B cell (primary cell): ENCODE measurements at regions of chr12 and their contacts with region 1.

Region 1: GRCh38 chr12:1605129-1606020 is 11.0 kb upstream of the FBXL14 start:
- DNase-seq: peak; percentile 83
- ATAC-seq: peak; percentile 61
- H3K4me3 ChIP-seq: peak overlapping the region; percentile 37 to 63 (median 44)
- H3K4me3 Mint-ChIP-seq: peak overlapping the region; percentile 97
- H3K27ac ChIP-seq: no peak overlapping the region
- H3K27ac Mint-ChIP-seq: peak overlapping the region; percentile 66
- H3K4me1 ChIP-seq: peaks cover 11 to 27% of the 10 kb centered on the region in 2 donors
- H3K4me1 Mint-ChIP-seq: peaks cover 29% of the 10 kb centered on the region
- H3K27me3 ChIP-seq: no peaks in the 10 kb centered on the region
- H3K27me3 Mint-ChIP-seq: peaks cover 3% of the 10 kb centered on the region
- CTCF ChIP-seq: peak; percentile 72

Region 2: DNA sequence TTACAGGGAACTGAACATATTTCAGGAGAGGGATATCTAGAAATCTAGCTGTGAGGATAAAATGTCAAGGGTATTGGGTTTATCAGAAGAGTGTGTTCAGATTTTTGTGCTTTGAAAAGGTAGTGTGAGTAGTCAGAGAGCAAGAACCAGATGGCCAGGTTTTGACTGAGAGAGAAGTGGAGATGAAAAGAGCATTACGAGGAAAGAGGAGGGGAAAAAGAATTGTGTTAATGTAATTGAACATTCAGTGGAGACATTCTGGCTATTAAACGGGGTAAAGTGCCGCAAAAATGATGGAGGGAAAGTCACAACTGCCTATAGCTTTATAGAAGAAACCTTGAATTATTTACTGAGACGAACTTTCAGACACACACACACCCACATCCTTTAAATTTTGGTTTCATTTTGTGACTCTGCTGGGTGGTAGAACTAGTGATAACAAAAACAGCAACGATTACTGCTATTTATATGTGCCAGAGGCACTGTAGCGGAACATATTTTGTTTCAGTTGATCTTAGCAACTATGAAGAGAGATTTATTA is 400.7 kb before region 1 on chr12:
- CTCF ChIA-PET with region 1: interaction called, 6 read pairs
- POLR2A ChIA-PET with region 1: no interaction called
- intact Hi-C with region 1: loop called (anchors 5 kb)
- DNase-seq: peak; percentile 74
- ATAC-seq: peak; percentile 87
- H3K4me3 ChIP-seq: peak overlapping the region; percentile 42 to 85 (median 63)
- H3K4me3 Mint-ChIP-seq: no peak overlapping the region
- H3K27ac ChIP-seq: peak overlapping the region; percentile 86 to 94
- H3K27ac Mint-ChIP-seq: no peak overlapping the region
- H3K4me1 ChIP-seq: peaks cover 23 to 48% of the 10 kb centered on the region in 2 donors
- H3K4me1 Mint-ChIP-seq: peaks cover 28% of the 10 kb centered on the region
- H3K27me3 ChIP-seq: no peaks in the 10 kb centered on the region
- H3K27me3 Mint-ChIP-seq: no peaks in the 10 kb centered on the region
- CTCF ChIP-seq: no peak

Region 3: DNA sequence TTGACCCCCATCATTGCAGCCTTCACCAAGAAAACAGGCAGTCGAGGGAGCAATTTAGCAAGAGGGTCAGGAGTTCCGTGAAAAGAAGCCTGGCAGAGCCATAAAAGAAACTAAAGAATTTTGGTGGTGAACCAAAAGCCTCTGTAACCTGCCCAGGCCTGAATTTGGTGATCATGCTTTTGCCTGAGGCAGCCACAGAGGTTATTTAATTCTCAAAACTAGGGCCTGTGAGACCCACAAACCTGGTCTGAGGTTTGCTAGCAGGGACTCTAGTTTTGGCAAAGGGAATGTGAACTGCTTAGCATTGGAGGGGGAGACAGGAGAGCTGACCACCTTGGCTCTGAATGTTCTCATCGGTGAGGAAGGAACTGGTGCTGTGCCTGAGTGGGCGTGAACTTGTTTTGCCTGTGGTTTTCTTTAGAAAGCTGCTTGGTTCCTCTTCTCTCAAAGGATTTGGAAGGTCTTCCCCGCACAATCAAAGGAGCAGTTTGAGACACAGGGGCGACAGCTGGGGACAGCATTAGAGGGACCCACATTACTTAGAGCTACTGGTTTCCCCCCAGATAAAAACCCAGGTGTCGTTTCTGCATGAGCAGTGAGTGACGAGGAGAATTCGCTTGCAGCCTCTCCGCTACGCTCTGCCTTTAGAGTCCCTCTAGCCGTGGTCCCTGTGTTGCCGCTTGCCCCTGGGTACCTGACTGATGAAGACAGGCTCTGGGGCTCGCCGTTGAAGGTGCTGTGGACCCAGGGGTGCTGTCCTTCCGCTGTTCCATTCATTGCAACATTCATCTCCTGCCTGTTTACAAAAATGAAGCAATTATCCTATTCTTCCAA is 11.1 kb after region 1 on chr12:
- CTCF ChIA-PET with region 1: interaction called, 12 read pairs
- POLR2A ChIA-PET with region 1: interaction called, 5 read pairs
- intact Hi-C with region 1: no loop called
- DNase-seq: peak; percentile 35
- ATAC-seq: peak; percentile 41
- H3K4me3 ChIP-seq: peak overlapping the region in 1 of 5 experiments; percentile 9
- H3K4me3 Mint-ChIP-seq: peak overlapping the region; percentile 42
- H3K27ac ChIP-seq: no peak overlapping the region
- H3K27ac Mint-ChIP-seq: no peak overlapping the region
- H3K4me1 ChIP-seq: peaks cover 17 to 25% of the 10 kb centered on the region in 2 donors
- H3K4me1 Mint-ChIP-seq: peaks cover 33% of the 10 kb centered on the region
- H3K27me3 ChIP-seq: peaks cover 0 to 2% (median 0%) of the 10 kb centered on the region in 4 experiments
- H3K27me3 Mint-ChIP-seq: no peaks in the 10 kb centered on the region
- CTCF ChIP-seq: no peak

Region 4: GRCh38 chr12:1634590-1635191 is 29.3 kb after region 1 on chr12:
- CTCF ChIA-PET with region 1: interaction called, 12 read pairs
- POLR2A ChIA-PET with region 1: no interaction called
- intact Hi-C with region 1: no loop called
- DNase-seq: peak; percentile 69
- ATAC-seq: peak; percentile 50
- H3K4me3 ChIP-seq: no peak overlapping the region
- H3K4me3 Mint-ChIP-seq: no peak overlapping the region
- H3K27ac ChIP-seq: no peak overlapping the region
- H3K27ac Mint-ChIP-seq: no peak overlapping the region
- H3K4me1 ChIP-seq: peaks cover 19 to 20% of the 10 kb centered on the region in 2 donors
- H3K4me1 Mint-ChIP-seq: peaks cover 19% of the 10 kb centered on the region
- H3K27me3 ChIP-seq: peaks cover 0 to 52% (median 31%) of the 10 kb centered on the region in 4 experiments
- H3K27me3 Mint-ChIP-seq: peaks cover 30% of the 10 kb centered on the region
- CTCF ChIP-seq: peak; percentile 91

Region 5: DNA sequence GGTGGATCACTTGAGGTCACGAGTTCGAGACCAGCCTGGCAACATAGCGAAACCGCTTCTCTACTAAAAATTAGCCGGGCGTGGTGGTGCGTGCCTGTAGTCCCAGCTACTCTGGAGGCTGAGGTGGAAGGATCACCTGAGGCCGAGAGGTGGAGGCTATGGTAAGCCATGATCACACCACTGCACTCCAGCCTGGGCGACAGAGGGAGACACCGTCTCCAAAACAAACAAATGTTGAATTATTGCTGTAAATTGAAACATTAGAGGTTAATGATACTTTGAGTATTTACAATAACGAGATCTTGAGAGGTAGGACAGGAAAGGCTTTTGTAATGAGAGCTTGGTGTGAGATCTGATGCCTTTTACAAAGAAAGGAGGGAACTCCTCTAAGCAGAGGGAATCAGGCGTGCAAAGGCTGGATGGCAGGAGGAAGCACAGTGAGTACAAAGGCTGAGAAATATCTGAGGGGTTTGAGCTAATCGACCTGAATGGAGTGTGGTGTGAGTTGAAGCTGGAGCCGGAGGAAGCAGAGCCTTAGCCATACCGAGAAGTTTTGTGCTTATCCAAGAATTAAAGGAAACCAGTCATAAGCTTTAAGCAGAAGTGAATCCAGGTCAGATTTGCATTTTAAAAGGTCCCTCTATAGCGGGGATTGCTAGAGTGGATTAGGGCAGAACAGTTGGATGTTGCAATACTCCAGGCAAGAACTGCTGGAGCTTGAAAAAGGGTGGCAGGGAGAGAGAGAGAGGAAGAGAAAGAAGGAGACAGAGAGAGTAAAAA is 1272.8 kb after region 1 on chr12:
- CTCF ChIA-PET with region 1: no interaction called
- POLR2A ChIA-PET with region 1: no interaction called
- intact Hi-C with region 1: no loop called
- DNase-seq: peak; percentile 71
- ATAC-seq: peak; percentile 40
- H3K4me3 ChIP-seq: peak overlapping the region; percentile 81 to 98 (median 88)
- H3K4me3 Mint-ChIP-seq: peak overlapping the region; percentile 97
- H3K27ac ChIP-seq: peak overlapping the region; percentile 90 to 91
- H3K27ac Mint-ChIP-seq: peak overlapping the region; percentile 96
- H3K4me1 ChIP-seq: peaks cover 17 to 23% of the 10 kb centered on the region in 2 donors
- H3K4me1 Mint-ChIP-seq: peaks cover 30% of the 10 kb centered on the region
- H3K27me3 ChIP-seq: no peaks in the 10 kb centered on the region
- H3K27me3 Mint-ChIP-seq: no peaks in the 10 kb centered on the region
- CTCF ChIP-seq: no peak